ENCODE measurements at regions of chr20 and their contacts with region 1.

Region 1: GRCh38 chr20:22684072-22684762 is 99.8 kb upstream of the FOXA2 start:
- DNase-seq: peak; percentile 60
- ATAC-seq: peak; percentile 84
- H3K4me3 ChIP-seq: no peak overlapping the region
- H3K27ac ChIP-seq: no peak overlapping the region
- H3K4me1 ChIP-seq: peaks cover 3 to 5% of the 10 kb centered on the region in 2 experiments; a peak in 1 of 4 replicates
- H3K27me3 ChIP-seq: no peaks in the 10 kb centered on the region; the same call in 1 of the 2 replicates
- CTCF ChIP-seq: peak; percentile 79 to 85 (median 80)
- POLR2A ChIP-seq: no peak
- RAD21 ChIP-seq: peak; percentile 92

Region 2: GRCh38 chr20:22333885-22334545 is 350.2 kb before region 1 on chr20:
- CTCF ChIA-PET with region 1: interaction called, 79 read pairs
- POLR2A ChIA-PET with region 1: interaction called, 5 read pairs
- RAD21 ChIA-PET with region 1: interaction called in 1 of 2 experiments, 3 read pairs
- intact Hi-C with region 1: loop called (anchors 1 kb)
- DNase-seq: peak; percentile 38
- ATAC-seq: peak; percentile 94
- H3K4me3 ChIP-seq: no peak overlapping the region
- H3K27ac ChIP-seq: no peak overlapping the region
- H3K4me1 ChIP-seq: no peaks in the 10 kb centered on the region
- H3K27me3 ChIP-seq: peaks cover 26% of the 10 kb centered on the region; the same call in 1 of the 2 replicates
- CTCF ChIP-seq: peak; percentile 57 to 80 (median 75); a peak in 5 of 6 replicates
- POLR2A ChIP-seq: no peak
- RAD21 ChIP-seq: peak; percentile 76

Region 3: GRCh38 chr20:22385602-22386305 is 298.5 kb before region 1 on chr20:
- CTCF ChIA-PET with region 1: no interaction called
- POLR2A ChIA-PET with region 1: no interaction called
- RAD21 ChIA-PET with region 1: interaction called in 1 of 2 experiments, 3 read pairs
- intact Hi-C with region 1: loop called (anchors 1 kb)
- DNase-seq: no peak
- ATAC-seq: peak; percentile 51
- H3K4me3 ChIP-seq: no peak overlapping the region
- H3K27ac ChIP-seq: no peak overlapping the region
- H3K4me1 ChIP-seq: peaks cover 17 to 33% of the 10 kb centered on the region in 2 experiments
- H3K27me3 ChIP-seq: no peaks in the 10 kb centered on the region
- CTCF ChIP-seq: peak; percentile 31 to 52 (median 42); a peak in 4 of 6 replicates
- POLR2A ChIP-seq: no peak
- RAD21 ChIP-seq: peak; percentile 81

Region 4: DNA sequence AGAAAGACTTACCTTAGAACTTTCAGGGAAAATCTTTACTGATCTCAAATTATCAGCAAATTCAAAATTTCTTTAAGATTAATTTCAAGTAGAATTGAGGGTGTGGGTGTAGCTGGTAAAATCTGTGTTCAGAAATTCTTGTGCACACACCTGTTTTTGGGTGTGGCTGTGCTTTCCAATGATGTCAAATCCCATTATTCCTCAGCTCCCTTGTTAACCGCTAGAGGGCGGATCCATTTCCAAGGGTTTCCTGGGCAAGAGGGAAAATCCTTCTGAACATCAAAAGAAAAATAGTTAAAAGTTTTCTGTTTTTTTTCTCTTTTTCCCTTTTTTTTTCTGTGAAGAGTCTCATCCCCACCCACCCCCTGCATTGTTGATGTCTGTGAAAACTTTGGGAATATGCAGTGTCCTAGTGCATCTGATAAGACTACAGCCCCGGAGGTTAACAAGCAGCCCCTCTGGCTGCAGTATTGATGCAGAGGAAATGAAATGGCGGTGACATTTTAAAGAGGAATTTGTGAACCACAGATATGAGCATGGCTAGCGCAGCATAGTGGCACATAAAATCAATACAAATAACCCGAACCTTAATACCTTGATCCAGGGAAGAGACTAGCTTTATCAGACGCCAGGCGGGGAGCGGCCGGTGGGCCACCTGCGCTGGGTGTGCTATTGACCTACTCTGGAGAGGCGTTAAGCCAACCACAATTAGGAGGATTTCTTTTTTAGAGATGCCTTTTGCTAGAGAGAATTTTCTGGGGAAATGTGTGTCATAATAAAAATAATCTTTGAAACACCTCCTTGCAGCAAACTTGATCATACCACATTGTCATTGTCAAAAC is 230.8 kb before region 1 on chr20:
- CTCF ChIA-PET with region 1: no interaction called
- POLR2A ChIA-PET with region 1: no interaction called
- RAD21 ChIA-PET with region 1: no interaction called
- intact Hi-C with region 1: loop called (anchors 5 kb)
- DNase-seq: peak; percentile 32
- ATAC-seq: 0 out of 2 replicates have a peak, but pooled peaks have one; percentile 58
- H3K4me3 ChIP-seq: no peak overlapping the region
- H3K27ac ChIP-seq: no peak overlapping the region
- H3K4me1 ChIP-seq: no peaks in the 10 kb centered on the region
- H3K27me3 ChIP-seq: 0 out of 2 replicates have a peak, but pooled peaks cover 3% of the 10 kb centered on the region
- CTCF ChIP-seq: peak; percentile 25 to 81 (median 80); a peak in 5 of 6 replicates
- POLR2A ChIP-seq: no peak
- RAD21 ChIP-seq: peak; percentile 42; the same call in 1 of the 2 replicates

Region 5: GRCh38 chr20:22586645-22587310 is 97.4 kb before region 1 on chr20:
- CTCF ChIA-PET with region 1: interaction called, 10 read pairs
- POLR2A ChIA-PET with region 1: interaction called, 3 read pairs
- RAD21 ChIA-PET with region 1: interaction called, 4 to 5 read pairs
- intact Hi-C with region 1: loop called (anchors 5 kb)
- DNase-seq: no peak
- ATAC-seq: peak; percentile 80
- H3K4me3 ChIP-seq: peak overlapping the region in 1 of 2 experiments; percentile 34; a peak in 2 of 4 replicates
- H3K27ac ChIP-seq: no peak overlapping the region
- H3K4me1 ChIP-seq: no peaks in the 10 kb centered on the region
- H3K27me3 ChIP-seq: peaks cover 23% of the 10 kb centered on the region
- CTCF ChIP-seq: peak; percentile 73 to 77 (median 73)
- POLR2A ChIP-seq: no peak
- RAD21 ChIP-seq: peak; percentile 80

Region 6: GRCh38 chr20:22732753-22733152 is 48.5 kb after region 1 on chr20:
- CTCF ChIA-PET with region 1: no interaction called
- POLR2A ChIA-PET with region 1: no interaction called
- RAD21 ChIA-PET with region 1: no interaction called
- intact Hi-C with region 1: no loop called
- DNase-seq: no peak
- ATAC-seq: no peak
- H3K4me3 ChIP-seq: no peak overlapping the region
- H3K27ac ChIP-seq: no peak overlapping the region
- H3K4me1 ChIP-seq: peaks cover 0 to 12% of the 10 kb centered on the region in 2 experiments; a peak in 1 of 4 replicates
- H3K27me3 ChIP-seq: no peaks in the 10 kb centered on the region
- CTCF ChIP-seq: 0 out of 6 replicates have a peak, but pooled peaks of 1 of the 3 experiments have one; percentile 3
- POLR2A ChIP-seq: no peak
- RAD21 ChIP-seq: no peak

Region 7: DNA sequence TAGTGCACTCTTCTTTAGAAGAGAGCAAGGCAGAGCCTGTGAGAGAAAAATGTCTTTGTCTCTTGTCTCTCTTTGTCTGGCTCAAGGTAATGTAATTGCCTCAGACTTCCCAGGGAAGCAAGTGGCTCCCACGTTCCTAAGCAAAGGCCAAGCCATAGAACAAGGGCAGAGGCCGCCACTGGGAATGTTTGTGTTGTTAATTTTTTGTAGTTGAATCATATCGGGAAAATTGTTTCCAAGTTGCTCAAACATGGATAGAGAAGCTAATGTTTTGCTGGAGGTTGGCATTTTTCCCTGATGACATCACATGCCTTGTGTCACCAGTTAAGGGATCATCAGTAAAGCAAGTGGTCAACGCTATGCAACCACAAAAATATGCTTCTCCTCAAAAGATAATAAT is 111.7 kb after region 1 on chr20:
- CTCF ChIA-PET with region 1: no interaction called
- POLR2A ChIA-PET with region 1: no interaction called
- RAD21 ChIA-PET with region 1: no interaction called
- intact Hi-C with region 1: no loop called
- DNase-seq: peak; percentile 37
- ATAC-seq: peak; percentile 52
- H3K4me3 ChIP-seq: no peak overlapping the region
- H3K27ac ChIP-seq: no peak overlapping the region
- H3K4me1 ChIP-seq: peaks cover 0 to 42% of the 10 kb centered on the region in 2 experiments; a peak in 3 of 4 replicates
- H3K27me3 ChIP-seq: no peaks in the 10 kb centered on the region; the same call in 1 of the 2 replicates
- CTCF ChIP-seq: no peak
- POLR2A ChIP-seq: no peak
- RAD21 ChIP-seq: no peak

Measured in HCT116 (cell line).